ENCODE measurements at regions of chr12 and their contacts with region 1.

Region 1: GRCh38 chr12:21677622-21678277 is 20.1 kb upstream of the LDHB start:
- DNase-seq: no peak
- H3K4me3 Mint-ChIP-seq: no peak overlapping the region
- H3K27ac Mint-ChIP-seq: no peak overlapping the region
- H3K4me1 Mint-ChIP-seq: peaks cover 31% of the 10 kb centered on the region
- H3K27me3 Mint-ChIP-seq: peaks cover 7% of the 10 kb centered on the region

Region 2: GRCh38 chr12:21248679-21249078 is 429.1 kb before region 1 on chr12:
- intact Hi-C with region 1: loop called (anchors 2 kb)
- DNase-seq: no peak
- H3K4me3 Mint-ChIP-seq: no peak overlapping the region
- H3K27ac Mint-ChIP-seq: no peak overlapping the region
- H3K4me1 Mint-ChIP-seq: no peaks in the 10 kb centered on the region
- H3K27me3 Mint-ChIP-seq: no peaks in the 10 kb centered on the region

Region 3: DNA sequence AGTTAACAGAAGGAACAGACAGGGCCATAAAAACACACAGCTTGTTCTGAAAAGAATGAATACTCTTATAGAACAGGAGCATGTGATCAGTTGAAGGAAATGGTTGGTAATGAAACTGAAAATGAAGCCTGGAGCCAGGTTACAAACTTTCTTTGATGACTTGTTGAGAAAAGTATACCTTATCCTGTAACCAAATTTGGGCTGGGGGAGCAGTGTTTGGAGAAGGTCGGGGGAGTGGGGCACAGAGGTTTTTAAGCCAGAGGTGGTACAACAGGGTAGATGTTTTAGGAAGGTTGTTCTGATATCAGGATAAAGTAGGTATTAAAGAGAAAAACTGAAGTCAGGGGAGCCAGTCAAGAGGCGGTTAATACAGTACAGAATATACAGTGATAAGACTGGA is 168.0 kb before region 1 on chr12:
- intact Hi-C with region 1: loop called (anchors 5 kb)
- DNase-seq: no peak
- H3K4me3 Mint-ChIP-seq: peak overlapping the region; percentile 72
- H3K27ac Mint-ChIP-seq: peak overlapping the region; percentile 90
- H3K4me1 Mint-ChIP-seq: peaks cover 36% of the 10 kb centered on the region
- H3K27me3 Mint-ChIP-seq: no peaks in the 10 kb centered on the region

Region 4: DNA sequence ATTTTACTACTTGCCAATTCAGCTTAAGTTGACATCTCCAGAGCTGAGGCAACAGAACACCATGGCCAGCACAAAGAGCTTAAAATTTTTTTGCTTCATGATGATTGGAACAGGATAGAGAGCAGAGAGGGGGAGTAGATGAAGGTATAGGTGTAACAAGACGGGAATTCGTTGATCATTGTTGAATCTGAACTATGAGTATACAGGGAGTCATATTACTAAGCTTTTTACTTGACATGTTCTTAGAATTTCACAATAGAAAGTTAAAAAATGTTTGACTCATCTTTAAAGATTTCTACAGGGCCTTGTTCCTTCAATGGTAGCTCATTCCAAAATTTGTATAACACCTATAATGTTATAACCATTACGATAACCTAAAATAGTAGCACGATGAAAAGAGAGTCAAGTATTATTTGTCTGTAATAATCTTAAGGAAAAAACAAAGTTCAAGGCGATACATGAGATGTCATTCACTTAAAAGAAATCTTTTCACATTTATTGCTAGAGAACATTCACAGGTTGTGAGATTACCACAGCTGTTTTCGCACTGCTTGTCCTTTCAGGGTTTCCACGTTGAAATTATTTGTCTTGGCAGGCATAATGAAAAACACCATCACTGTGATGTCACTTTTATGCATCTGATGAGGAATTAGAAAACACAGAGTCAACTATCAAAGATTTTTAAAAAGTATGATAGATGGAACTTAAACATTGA is 117.7 kb before region 1 on chr12:
- intact Hi-C with region 1: loop called (anchors 5 kb)
- DNase-seq: no peak
- H3K4me3 Mint-ChIP-seq: no peak overlapping the region
- H3K27ac Mint-ChIP-seq: peak overlapping the region; percentile 75
- H3K4me1 Mint-ChIP-seq: peaks cover 11% of the 10 kb centered on the region
- H3K27me3 Mint-ChIP-seq: no peaks in the 10 kb centered on the region

Region 5: DNA sequence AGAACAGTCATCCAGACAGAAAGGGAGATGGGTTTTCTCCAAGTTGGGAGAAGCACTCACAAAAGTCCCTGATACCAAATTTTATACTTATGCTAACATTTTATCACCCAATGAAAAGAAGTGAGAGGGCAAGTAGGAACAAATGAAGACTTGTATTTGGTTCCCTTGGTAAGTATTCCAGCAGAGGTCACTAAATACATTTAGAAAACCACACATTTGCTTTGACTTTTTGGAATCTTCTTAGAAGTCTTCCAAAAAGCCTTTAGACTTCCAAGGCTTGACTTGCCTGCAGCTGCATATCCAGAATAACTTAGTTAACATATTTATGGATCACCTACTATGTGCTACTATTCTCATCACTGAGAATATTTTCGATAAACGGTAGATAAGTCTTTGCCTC is 70.0 kb before region 1 on chr12:
- intact Hi-C with region 1: loop called (anchors 1 kb)
- DNase-seq: no peak
- H3K4me3 Mint-ChIP-seq: no peak overlapping the region
- H3K27ac Mint-ChIP-seq: no peak overlapping the region
- H3K4me1 Mint-ChIP-seq: no peaks in the 10 kb centered on the region
- H3K27me3 Mint-ChIP-seq: peaks cover 6% of the 10 kb centered on the region

Region 6: DNA sequence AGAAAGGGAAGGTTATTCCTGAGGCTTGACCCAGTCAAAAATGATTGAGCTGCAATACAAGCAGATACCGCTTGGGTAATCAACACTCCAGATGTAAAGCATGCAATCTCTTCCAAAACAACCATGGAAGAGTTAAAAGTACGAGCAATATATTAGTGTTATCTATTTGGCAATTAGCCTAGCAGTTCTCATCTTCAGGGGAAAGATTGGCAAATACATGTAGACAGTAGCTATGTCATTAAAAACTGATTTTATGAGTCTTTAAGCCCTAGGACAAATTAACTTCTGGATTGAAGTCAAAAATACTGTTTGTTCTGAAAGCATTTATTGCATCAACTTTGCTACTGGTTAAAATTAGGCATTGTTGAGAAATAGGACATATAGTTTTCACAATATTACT is 63.8 kb before region 1 on chr12:
- intact Hi-C with region 1: loop called (anchors 2 kb)
- DNase-seq: no peak
- H3K4me3 Mint-ChIP-seq: no peak overlapping the region
- H3K27ac Mint-ChIP-seq: no peak overlapping the region
- H3K4me1 Mint-ChIP-seq: peaks cover 40% of the 10 kb centered on the region
- H3K27me3 Mint-ChIP-seq: no peaks in the 10 kb centered on the region

Region 7: DNA sequence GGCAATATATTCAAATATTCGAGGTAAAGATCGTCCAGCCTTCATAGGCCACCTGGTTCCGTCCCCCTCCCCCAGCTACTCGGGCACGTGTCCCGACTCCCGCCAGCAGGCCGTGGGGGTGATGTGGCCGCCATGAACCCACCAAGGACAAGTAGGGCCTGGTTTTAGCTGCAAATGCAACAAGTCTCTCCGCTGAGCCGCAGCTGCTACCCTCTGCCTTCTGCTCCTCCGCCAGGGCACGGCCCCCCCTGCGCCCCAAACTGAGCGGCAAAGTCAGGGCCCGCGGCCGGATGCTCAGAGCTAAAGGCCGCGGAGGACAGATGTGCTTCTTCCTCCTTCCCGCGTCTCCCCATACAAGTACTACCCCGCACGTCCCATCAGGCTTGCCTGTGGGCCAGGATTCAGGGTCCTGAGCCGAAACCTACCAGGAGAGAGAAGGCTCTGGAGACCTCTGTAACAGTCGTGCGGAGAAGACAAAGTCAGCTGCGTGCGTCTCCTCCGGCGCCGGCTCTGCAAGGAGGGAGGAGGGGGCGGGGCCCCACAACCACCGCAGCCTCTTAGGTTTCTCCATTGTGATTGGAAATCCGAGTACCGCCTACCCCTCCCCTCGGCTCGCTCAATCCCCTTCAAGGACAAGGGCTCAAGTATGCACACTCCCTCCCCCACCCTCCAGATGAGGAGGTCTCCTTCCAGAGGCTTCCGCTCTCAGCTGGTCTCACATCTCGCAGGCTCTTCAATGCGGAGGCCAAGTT is 20.2 kb before region 1 on chr12 and contains the start of gene LDHB:
- intact Hi-C with region 1: loop called (anchors 1 kb)
- DNase-seq: peak; percentile 93
- H3K4me3 Mint-ChIP-seq: peak within 1 kb of the TSS; percentile 99
- H3K27ac Mint-ChIP-seq: peak within 1 kb of the TSS; percentile 99
- H3K4me1 Mint-ChIP-seq: peaks cover 37% of the 10 kb centered on the region
- H3K27me3 Mint-ChIP-seq: no peaks in the 10 kb centered on the region
- total RNA-seq, gene LDHB: 1,305 and 1,321 TPM in 2 replicates